ENCODE measurements at regions of chr7 and their contacts with region 1.

Region 1: GRCh38 chr7:29408841-29409243 is 154.8 kb upstream of the PRR15 start:
- DNase-seq: peak; percentile 28
- ATAC-seq: peak; percentile 56 to 65

Region 2: DNA sequence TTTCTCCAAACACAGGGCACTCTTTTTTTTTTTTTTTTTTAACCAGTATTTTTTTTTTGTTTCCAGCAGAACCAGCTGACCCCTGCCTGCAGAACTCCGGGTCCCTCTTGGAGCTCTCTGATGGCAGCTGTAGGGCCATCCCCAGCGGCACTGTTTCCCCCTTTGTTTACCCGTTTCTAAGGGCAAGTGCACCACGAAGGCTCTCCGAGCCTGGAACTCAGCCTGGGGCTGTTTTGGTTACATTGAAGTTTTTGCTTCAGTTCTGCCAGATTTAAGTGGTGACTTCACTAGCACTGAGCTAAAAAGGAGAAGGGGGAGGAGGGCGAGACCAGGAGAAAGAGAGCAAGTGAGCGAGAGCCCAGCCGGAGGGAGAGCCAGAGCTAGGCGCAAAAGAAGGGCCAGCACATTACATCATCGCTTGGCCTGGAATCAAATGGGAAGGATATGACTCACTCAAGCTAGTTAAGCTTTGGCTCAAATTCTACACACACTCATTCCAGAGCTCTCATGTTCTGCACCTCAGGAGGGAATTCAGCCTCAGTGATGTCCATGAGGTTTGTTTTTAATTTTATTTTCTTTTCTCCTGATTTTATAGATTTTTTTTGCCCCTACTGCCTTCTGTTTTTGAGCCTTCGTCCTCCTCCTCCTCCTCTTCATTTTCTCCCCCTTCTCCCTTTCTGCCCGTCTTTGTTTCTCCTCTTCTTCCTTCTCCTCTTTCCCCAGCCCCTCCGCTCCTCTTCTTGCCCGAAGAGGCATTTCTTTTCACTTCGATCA is 723.0 kb before region 1 on chr7:
- intact Hi-C with region 1: no loop called
- DNase-seq: peak; percentile 92
- ATAC-seq: peak; percentile 95 to 96

Region 3: DNA sequence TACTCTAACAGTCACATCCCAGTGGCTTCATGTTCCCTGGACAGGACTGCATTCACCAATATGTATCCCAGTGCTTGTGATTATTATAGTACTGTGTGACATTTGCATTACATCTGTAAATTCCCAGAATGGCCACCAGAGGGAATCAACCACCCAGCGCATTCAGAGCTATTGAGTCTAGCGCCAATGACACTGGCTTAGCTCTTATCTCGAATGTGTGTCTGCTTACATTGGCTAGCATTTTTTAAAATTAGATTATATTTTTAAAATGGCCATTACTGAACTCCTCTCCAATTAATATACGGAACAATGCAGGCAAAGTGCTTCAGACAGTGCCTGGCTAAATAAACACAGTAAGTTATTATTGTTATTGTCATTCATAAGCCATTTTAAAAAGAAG is 487.0 kb before region 1 on chr7:
- intact Hi-C with region 1: loop called (anchors 2 to 5 kb)
- DNase-seq: no peak
- ATAC-seq: peak; percentile 94

Region 4: GRCh38 chr7:29105752-29106668 is 302.8 kb before region 1 on chr7:
- intact Hi-C with region 1: loop called (anchors 5 to 10 kb)
- DNase-seq: no peak
- ATAC-seq: peak; percentile 66 to 72

Region 5: DNA sequence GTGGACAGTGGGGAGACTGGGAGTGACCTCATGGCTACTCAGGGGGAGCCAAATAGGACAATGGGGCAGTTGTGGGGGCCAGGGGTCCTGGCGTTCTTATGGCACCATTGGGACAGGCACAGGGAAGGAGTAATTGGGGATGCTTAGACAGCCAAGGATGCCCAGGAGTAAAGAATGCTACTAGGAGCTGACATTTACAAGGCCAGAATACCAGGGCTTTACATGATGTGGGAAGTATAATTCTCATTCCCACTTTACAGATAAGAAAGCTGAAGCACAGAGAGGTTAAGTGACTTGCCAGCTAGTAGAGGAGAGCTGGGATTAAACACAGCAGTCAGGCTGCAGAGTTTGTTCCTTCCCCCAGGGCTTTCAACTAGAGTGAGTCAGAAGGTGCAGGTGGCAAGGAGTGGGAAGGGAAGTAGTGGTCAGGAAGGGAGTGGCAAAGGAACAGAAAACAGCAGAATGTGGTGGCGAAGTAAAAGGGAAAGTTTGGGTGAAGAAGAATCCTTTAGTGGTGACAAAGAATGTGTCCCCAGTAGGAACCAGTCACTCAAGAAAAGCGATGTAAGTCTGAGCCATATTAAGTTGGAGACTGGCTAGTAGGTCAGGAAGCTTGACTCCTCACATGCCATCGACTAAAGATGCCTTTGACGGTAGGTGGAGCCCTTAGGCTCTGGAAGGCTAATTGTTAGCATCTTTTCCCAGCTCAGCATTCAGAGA is 295.3 kb before region 1 on chr7:
- intact Hi-C with region 1: loop called (anchors 5 to 10 kb)
- DNase-seq: no peak
- ATAC-seq: peak in 1 of 2 donors; percentile 58

Region 6: GRCh38 chr7:29189743-29190201 is 219.1 kb before region 1 on chr7:
- intact Hi-C with region 1: loop called (anchors 2 to 5 kb)
- DNase-seq: peak; percentile 63
- ATAC-seq: peak; percentile 38 to 72

Region 7: DNA sequence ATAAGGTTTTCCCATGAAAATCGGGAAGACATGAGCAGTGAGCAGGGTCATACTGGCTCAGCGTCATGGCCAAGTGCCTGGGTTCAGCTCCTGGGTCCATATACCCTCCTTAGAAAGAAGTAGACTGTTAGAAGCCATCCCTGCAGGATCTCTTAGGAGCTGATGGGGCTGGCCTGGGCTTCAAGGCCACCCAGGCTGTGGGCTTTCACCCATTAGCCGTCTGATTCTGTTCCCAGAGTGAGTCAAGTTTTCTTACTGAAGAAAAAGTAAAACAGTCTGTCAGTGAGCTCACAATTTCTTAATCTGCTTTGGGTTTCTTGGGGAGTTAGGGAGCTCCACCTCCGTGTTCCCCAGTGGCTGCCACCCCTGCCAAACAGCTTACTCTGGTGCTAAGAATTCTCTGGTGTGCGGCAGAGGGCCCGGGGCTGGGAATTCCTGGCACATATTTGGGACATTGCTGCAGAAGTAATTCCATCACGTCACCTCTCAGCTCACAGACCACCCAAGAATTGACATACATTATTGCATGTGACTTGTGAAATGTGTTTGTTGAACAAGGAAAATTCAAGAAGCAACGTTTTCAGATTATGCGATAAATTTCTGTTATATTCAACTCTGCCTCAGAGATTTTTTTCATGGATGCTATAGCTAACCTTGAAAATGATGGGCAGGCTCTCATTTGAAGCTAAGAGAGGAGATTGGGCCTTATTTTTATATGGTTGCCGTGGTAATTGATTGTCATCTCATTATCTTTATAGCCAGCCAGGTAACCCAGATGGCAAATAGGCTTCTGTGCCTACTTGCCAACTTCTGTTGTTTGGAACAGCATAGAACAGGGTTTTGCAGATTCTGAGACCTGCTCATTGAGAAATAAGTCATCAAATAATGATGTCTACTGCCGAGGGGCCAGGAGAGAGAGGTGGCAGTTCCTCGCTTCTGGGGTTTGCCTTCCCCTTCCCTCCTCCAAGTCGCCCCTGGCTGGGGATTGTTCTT is 47.9 kb before region 1 on chr7:
- intact Hi-C with region 1: no loop called
- DNase-seq: peak; percentile 24
- ATAC-seq: peak in 1 of 2 donors; percentile 34